Heart right ventricle (tissue), 16 donors: ENCODE measurements at regions of chr22 and their contacts with region 1.

Region 1: DNA sequence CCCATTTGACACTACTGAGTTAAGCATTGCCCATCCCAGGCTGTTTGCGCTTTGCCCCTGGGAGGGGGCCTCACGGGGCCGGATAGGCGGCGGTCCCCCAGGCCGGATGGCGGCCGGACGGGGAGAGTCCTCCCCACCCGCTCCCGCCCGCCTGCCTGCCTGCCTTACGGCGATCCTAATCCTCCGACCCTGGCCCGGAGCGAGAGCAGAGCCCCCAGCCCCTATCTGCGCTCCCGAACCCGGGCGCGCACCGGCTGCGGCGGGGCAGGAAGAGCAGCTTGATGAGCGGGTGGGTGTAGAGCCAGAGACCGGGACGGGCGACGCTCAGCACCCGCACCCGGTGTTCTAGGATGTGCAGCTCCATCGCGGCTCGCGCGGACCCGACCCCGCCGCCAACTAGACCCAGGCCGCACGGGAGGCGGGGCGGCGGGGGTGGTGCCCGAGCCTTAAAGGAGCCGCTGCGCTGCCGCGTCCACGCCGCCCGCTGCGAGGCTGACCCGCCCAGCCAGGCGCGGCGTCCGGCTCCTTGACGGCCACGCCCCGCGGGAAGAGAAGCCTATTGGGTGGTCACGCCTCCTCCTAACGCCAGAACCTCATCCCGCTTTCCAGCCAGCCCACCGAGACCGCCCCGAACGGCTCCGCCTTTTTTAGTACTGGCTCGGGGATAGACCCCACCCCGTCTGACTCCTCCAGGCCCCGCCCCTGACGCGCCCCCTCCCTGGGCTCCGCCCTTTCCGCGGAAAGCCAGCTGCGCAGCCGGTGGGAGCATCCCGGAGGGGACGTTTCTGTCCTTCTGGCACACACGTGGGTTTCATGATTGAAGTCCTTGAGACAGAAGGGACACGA is at the start of gene CASTOR1:
- DNase-seq: peak; percentile 99
- ATAC-seq: peak; percentile 87 to 92 (median 91)
- H3K4me3 ChIP-seq: peak within 1 kb of the TSS; percentile 56 to 99 (median 92)
- H3K27ac ChIP-seq: peak within 1 kb of the TSS; percentile 83 to 98 (median 93)
- H3K4me1 ChIP-seq: peaks cover 17 to 49% (median 39%) of the 10 kb centered on the region in 9 donors
- H3K27me3 ChIP-seq: no peaks in the 10 kb centered on the region
- CTCF ChIP-seq: peak in 1 of 9 donors; percentile 6
- total RNA-seq, gene CASTOR1: 2.8 to 7.9 (median 5.4) TPM

Region 2: DNA sequence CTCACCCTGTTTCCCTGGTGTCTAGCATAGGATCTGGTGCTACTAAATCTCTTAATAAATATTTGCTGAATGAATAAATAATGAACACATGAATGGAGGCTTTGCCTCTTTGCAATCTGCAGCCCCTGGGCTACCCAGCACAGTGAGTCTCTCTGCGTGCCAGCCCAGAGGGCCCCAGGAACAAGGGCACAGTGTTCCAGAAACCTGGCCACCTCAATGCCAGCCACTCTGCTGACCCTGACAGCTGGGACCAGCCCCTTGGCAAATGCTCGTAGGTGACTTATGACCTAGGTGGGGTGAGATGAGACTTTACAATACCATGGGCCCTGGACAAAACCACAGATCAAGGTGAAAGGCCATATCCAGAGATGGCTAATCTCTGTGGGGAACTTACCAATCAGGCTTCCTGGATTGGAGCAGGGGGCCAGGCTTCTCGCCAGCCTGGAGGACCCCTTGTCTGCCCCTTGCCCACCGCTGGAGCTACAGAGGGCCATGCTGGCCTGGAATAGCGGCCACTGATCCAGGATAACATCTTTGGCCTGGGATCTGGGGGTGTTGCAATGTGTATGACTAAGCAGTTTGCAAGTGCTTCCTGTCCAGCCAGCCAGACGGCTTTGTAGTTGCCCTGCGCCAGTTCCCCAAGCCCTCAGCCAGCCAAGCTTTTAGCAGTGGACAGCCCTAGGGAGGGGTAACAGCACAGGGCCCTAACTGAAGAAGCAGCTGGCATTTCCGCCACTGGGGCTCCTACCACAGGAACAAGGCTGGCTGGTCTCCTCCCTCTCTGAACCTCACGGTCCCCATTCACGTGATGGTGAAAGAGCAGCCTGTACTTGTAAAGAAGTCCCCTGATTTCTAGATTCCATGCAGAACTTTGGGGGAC is 490.3 kb before region 1 on chr22:
- intact Hi-C with region 1: no loop called
- DNase-seq: peak; percentile 84 to 90
- ATAC-seq: peak; percentile 95 to 98 (median 97)
- H3K4me3 ChIP-seq: peak overlapping the region in 4 of 10 donors; percentile 10 to 18 (median 16)
- H3K27ac ChIP-seq: peak overlapping the region; percentile 52 to 94 (median 82)
- H3K4me1 ChIP-seq: peaks cover 11 to 46% (median 32%) of the 10 kb centered on the region in 9 donors
- H3K27me3 ChIP-seq: no peaks in the 10 kb centered on the region
- CTCF ChIP-seq: peak in 3 of 9 donors; percentile 21 to 30 (median 24)

Region 3: DNA sequence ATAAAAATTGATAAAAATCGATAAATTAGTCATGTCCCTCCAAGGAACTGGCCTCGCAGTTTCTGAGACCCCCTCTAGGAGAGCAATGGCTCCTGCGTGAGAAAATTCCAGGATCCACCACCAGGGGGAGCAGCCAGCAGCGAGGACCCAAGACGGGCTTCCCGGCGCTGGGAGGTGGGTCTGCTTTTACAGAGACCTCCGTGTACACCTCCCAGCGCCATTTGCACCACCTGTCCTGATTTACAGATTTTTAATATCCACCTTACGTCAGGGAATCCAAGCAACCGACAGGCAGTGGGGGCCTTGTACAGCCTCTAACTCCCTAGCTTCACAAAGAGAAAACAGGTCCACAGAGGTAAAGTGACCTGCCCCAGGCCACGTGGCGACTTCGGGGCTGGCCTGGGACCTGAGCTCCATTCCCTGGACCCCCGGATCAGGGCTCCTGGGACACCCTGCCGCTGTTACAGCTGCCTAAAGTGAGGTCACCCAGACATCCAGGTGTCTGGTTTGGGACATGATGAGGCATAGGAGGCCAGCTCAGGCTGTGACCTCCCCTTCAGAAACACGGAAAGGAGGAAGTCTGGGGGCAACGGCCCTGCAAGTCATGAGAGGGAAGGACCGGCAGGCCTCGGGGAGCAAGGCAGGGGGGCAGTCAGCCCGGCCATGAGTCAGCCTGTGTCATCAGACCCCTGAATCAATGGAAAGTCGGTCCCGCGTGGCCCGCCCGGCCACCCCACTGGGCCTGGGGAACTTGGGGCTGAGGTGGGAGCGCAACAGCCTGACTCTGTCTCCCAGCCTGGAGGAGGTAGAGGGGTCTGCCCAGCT is 26.2 kb before region 1 on chr22:
- intact Hi-C with region 1: loop called in 1 of 10 experiments (anchors 2 kb)
- DNase-seq: peak; percentile 71 to 76
- ATAC-seq: peak in 6 of 8 donors; percentile 8 to 59 (median 52)
- H3K4me3 ChIP-seq: peak overlapping the region in 5 of 10 donors; percentile 19 to 32 (median 25)
- H3K27ac ChIP-seq: peak overlapping the region in 1 of 10 donors; percentile 71
- H3K4me1 ChIP-seq: peaks cover 0 to 56% (median 4%) of the 10 kb centered on the region in 9 donors
- H3K27me3 ChIP-seq: peaks cover 0 to 25% (median 11%) of the 10 kb centered on the region in 7 donors
- CTCF ChIP-seq: peak; percentile 91 to 99 (median 97)

Region 4: DNA sequence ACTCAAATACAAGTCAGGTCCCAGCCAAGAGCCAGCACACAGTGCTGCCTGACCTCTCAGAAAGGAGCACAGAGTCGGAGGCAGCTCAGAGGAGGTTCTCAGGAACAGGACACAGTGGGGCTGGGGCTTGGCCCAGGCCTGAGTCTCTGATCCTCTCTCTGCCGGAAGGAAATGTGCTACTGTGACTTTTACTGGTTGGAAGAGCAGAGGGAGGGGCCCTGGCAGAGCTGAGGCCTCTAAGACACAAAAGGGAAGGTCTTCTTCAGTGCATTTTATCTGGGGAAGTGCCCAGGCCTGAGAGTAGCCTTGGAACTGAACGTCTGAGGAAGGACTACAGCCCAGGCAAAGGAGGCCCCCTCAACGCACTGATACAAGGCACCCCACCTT is 16.2 kb after region 1 on chr22:
- intact Hi-C with region 1: loop called in 2 of 10 experiments (anchors 2 kb)
- DNase-seq: peak; percentile 68 to 78
- ATAC-seq: peak; percentile 77 to 90 (median 84)
- H3K4me3 ChIP-seq: peak overlapping the region in 3 of 10 donors; percentile 3 to 26 (median 7)
- H3K27ac ChIP-seq: peak overlapping the region; percentile 67 to 92 (median 80)
- H3K4me1 ChIP-seq: peaks cover 41 to 100% (median 98%) of the 10 kb centered on the region in 9 donors
- H3K27me3 ChIP-seq: no peaks in the 10 kb centered on the region
- CTCF ChIP-seq: no peak

Region 5: GRCh38 chr22:30326706-30327362 is 37.5 kb after region 1 on chr22 and contains the start of gene TBC1D10A:
- intact Hi-C with region 1: loop called in 8 of 10 experiments (anchors 1 to 5 kb)
- DNase-seq: peak; percentile 84 to 91
- ATAC-seq: peak; percentile 90 to 97 (median 94)
- H3K4me3 ChIP-seq: peak within 1 kb of the TSS; percentile 64 to 100 (median 96)
- H3K27ac ChIP-seq: peak within 1 kb of the TSS; percentile 78 to 94 (median 89)
- H3K4me1 ChIP-seq: peaks cover 11 to 51% (median 43%) of the 10 kb centered on the region in 9 donors
- H3K27me3 ChIP-seq: no peaks in the 10 kb centered on the region
- CTCF ChIP-seq: no peak
- total RNA-seq, gene TBC1D10A: 3.2 to 7.5 (median 5.6) TPM

Region 6: GRCh38 chr22:30340911-30341685 is 51.7 kb after region 1 on chr22:
- intact Hi-C with region 1: loop called in 1 of 10 experiments (anchors 5 kb)
- DNase-seq: peak; percentile 74 to 79
- ATAC-seq: peak; percentile 81 to 94 (median 87)
- H3K4me3 ChIP-seq: no peak overlapping the region
- H3K27ac ChIP-seq: peak overlapping the region in 8 of 10 donors; percentile 21 to 72 (median 57)
- H3K4me1 ChIP-seq: peaks cover 3 to 65% (median 35%) of the 10 kb centered on the region in 9 donors
- H3K27me3 ChIP-seq: no peaks in the 10 kb centered on the region
- CTCF ChIP-seq: no peak

Region 7: DNA sequence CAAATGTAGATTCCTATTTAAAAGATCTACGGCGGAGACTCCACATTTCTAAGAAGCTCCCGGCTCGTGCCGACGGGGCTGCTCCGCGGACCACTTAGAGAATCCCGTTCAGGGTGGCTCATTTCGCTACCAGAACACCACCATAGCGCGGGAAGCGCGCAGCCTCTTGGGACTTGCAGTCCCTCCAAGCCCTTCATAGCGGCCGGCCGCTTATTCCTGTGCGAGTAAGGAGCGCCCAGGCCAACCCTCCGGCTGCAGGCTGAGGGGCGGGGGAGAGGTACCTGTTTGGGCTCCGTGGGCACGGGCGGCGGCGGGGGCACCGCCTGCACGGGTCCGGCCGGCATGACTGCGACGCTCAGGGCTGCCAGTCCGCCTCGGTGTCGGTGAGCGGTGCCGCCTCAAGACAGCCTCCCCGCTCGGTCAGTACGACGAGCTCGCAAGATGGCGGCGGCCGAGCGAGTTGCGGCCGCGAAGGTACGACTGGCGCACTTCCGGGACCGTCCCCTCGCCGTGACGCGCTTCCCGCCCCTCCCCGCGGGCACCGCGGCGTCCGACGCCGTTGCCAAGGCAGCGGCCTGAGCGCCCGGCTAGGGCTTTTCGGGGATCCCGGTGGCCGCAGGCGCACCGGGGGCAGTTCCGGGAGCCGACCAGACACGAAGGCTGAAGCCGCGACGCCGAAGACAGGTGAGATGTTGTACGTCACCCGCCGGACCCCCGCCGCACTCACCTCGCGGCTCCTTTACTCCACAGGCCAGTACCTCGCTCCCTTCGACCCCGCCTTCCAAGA is 67.3 kb after region 1 on chr22 and contains the starts of genes CCDC157 and SF3A1:
- intact Hi-C with region 1: loop called in 7 of 10 experiments (anchors 1 to 10 kb)
- DNase-seq: peak; percentile 85 to 90
- ATAC-seq: peak; percentile 98 to 99 (median 98)
- H3K4me3 ChIP-seq: peak within 1 kb of the TSS; percentile 53 to 97 (median 83)
- H3K27ac ChIP-seq: peak within 1 kb of the TSS; percentile 88 to 99 (median 96)
- H3K4me1 ChIP-seq: peaks cover 11 to 42% (median 32%) of the 10 kb centered on the region in 9 donors
- H3K27me3 ChIP-seq: no peaks in the 10 kb centered on the region
- CTCF ChIP-seq: peak in 1 of 9 donors; percentile 17
- total RNA-seq, gene CCDC157: 0.11 to 1.2 (median 0.85) TPM
- total RNA-seq, gene SF3A1: 84.4 to 132 (median 111) TPM

Region 8: DNA sequence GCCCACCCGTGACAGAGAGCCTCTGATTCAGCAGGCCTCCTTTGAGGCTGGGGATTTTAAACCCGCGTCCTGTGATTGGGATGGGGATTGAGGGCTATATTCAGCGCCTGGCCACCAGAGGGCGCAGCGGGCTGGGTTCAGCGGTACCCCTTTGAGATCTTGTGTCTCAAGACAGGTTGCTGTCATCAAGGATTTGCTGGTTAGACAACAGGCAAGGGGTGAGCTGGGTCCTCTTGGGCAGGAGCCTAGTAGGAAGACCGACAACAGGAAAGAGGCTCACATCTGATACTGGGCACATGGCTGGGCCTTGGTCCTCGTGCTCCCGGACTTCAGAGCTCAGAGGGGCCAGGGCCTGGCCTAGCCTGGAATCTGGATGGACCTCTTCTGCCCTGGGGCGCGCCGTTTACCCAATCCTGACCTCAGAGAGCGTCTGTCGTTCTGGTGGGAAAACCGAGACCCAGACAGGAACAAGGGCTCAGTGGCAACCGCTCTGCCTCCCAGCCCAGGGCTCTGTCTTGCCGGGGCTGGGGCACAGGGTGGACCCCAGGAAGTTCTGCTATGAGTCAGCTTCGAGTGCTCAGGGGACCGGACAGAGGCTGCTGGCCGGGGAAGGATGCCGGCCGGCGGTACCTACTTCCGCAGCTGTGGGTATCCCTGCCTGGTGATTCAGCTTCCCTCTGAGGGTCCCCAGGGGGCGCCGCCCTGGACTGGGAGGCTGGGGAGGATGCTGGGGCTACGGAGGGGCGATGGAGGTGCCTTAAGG is 345.3 kb after region 1 on chr22:
- intact Hi-C with region 1: no loop called
- DNase-seq: peak; percentile 87 to 89
- ATAC-seq: peak; percentile 68 to 89 (median 80)
- H3K4me3 ChIP-seq: peak overlapping the region; percentile 52 to 91 (median 74)
- H3K27ac ChIP-seq: peak overlapping the region; percentile 60 to 97 (median 90)
- H3K4me1 ChIP-seq: peaks cover 16 to 38% (median 33%) of the 10 kb centered on the region in 9 donors
- H3K27me3 ChIP-seq: no peaks in the 10 kb centered on the region
- CTCF ChIP-seq: peak; percentile 86 to 97 (median 95)